AG04450 (cell line): ENCODE measurements at regions of chr3 and their contacts with region 1.

Region 1: GRCh38 chr3:123218990-123219389 is 17.2 kb downstream of the SEC22A start:
- DNase-seq: no peak
- H3K4me3 ChIP-seq: no peak overlapping the region
- H3K27ac ChIP-seq: no peak overlapping the region
- H3K27me3 ChIP-seq: no peaks in the 10 kb centered on the region
- CTCF ChIP-seq: no peak

Region 2: GRCh38 chr3:123194552-123194951 is 24.4 kb before region 1 on chr3:
- CTCF ChIA-PET with region 1: no interaction called
- POLR2A ChIA-PET with region 1: no interaction called
- DNase-seq: no peak
- H3K4me3 ChIP-seq: no peak overlapping the region
- H3K27ac ChIP-seq: no peak overlapping the region
- H3K27me3 ChIP-seq: no peaks in the 10 kb centered on the region
- CTCF ChIP-seq: peak; percentile 61

Region 3: GRCh38 chr3:123307064-123307463 is 88.1 kb after region 1 on chr3:
- CTCF ChIA-PET with region 1: no interaction called
- POLR2A ChIA-PET with region 1: interaction called, 14 read pairs
- DNase-seq: no peak
- H3K4me3 ChIP-seq: no peak overlapping the region
- H3K27ac ChIP-seq: no peak overlapping the region
- H3K27me3 ChIP-seq: peaks cover 22% of the 10 kb centered on the region
- CTCF ChIP-seq: no peak